Dendritic cell treated with granulocyte-macrophage colony-stimulating factor and Interleukin-4, amounts not matched to agents 40 ng/mL and 50 ng/mL, for 4 days (primary cell): ENCODE measurements at regions of chr6 and their contacts with region 1.

Region 1: DNA sequence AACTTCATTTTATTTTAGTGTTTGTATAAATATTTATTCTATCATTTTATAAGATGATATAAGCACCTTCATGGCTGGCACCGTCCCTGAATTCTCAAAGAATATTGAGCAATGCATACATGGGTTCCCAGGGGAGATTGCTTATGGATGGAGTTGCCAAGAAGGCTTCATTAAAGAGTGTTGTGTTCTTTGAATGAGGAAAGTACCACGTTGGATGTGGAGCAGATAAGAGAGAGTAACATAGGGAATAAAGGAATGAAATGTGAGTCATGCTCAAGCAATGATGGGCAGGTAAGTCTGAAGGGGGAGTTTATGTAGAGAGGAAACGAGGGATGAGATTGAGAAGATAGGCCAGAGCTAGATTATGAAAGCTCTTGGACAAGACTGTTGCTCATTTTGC is 10.3 kb downstream of the DSE start:
- H3K4me3 Mint-ChIP-seq: no peak overlapping the region
- H3K27ac Mint-ChIP-seq: no peak overlapping the region
- H3K4me1 Mint-ChIP-seq: peaks cover 80% of the 10 kb centered on the region
- H3K27me3 Mint-ChIP-seq: no peaks in the 10 kb centered on the region

Region 2: DNA sequence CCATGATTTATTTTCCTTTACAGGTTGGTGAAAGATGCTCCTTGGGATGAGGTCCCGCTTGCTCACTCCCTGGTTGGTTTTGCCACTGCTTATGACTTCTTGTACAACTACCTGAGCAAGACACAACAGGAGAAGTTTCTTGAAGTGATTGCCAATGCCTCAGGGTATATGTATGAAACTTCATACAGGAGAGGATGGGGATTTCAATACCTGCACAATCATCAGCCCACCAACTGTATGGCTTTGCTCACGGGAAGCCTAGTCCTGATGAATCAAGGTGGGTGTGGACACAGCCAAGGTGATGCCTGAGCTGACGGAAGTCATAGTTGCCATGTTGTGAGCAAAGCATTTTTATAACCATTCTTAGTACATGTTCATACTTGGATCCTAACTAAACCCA is 45.5 kb after region 1 on chr6:
- intact Hi-C with region 1: loop called (anchors 5 kb)
- H3K4me3 Mint-ChIP-seq: no peak overlapping the region
- H3K27ac Mint-ChIP-seq: peak overlapping the region; percentile 60
- H3K4me1 Mint-ChIP-seq: peaks cover 26% of the 10 kb centered on the region
- H3K27me3 Mint-ChIP-seq: no peaks in the 10 kb centered on the region

Region 3: DNA sequence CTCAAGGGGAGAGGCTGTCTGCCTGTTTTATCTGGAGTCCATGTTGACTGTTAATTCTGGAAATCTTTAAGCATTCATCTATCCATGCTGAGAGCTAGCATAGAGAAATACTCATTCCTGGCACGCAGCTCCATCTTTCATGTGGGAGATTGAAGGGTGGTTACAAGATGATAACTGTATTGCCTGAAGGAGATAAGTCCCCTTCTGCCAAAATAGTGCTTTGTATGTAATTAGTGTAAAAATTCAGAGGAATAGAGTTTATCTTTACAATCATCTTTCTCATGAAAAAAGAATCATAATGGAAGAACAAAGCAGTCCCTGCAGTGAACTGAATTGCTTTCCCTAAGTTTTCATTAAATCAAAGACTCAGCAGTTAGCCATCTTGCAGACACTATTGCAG is 1782.5 kb after region 1 on chr6:
- intact Hi-C with region 1: no loop called
- H3K4me3 Mint-ChIP-seq: no peak overlapping the region
- H3K27ac Mint-ChIP-seq: no peak overlapping the region
- H3K4me1 Mint-ChIP-seq: no peaks in the 10 kb centered on the region
- H3K27me3 Mint-ChIP-seq: no peaks in the 10 kb centered on the region